Calu3 (cell line): ENCODE measurements at regions of chr7 and their contacts with region 1.

Region 1: GRCh38 chr7:142669074-142669654 is 80.1 kb upstream of the PRSS1 start:
- DNase-seq: no peak
- H3K4me3 Mint-ChIP-seq: no peak overlapping the region
- H3K27ac Mint-ChIP-seq: no peak overlapping the region
- H3K4me1 Mint-ChIP-seq: no peaks in the 10 kb centered on the region
- H3K27me3 Mint-ChIP-seq: peaks cover 52% of the 10 kb centered on the region
- CTCF ChIP-seq: no peak

Region 2: GRCh38 chr7:142711746-142712619 is 42.8 kb after region 1 on chr7:
- CTCF ChIA-PET with region 1: no interaction called
- intact Hi-C with region 1: loop called (anchors 1 kb)
- DNase-seq: peak; percentile 18
- H3K4me3 Mint-ChIP-seq: no peak overlapping the region
- H3K27ac Mint-ChIP-seq: no peak overlapping the region
- H3K4me1 Mint-ChIP-seq: peaks cover 12% of the 10 kb centered on the region
- H3K27me3 Mint-ChIP-seq: peaks cover 80% of the 10 kb centered on the region
- CTCF ChIP-seq: peak; percentile 59

Region 3: GRCh38 chr7:142811154-142811737 is 142.1 kb after region 1 on chr7:
- CTCF ChIA-PET with region 1: no interaction called
- intact Hi-C with region 1: loop called (anchors 1 kb)
- DNase-seq: peak; percentile 39
- H3K4me3 Mint-ChIP-seq: no peak overlapping the region
- H3K27ac Mint-ChIP-seq: no peak overlapping the region
- H3K4me1 Mint-ChIP-seq: peaks cover 47% of the 10 kb centered on the region
- H3K27me3 Mint-ChIP-seq: peaks cover 66% of the 10 kb centered on the region
- CTCF ChIP-seq: peak; percentile 73